ENCODE measurements at regions of chr18 and their contacts with region 1.

Region 1: DNA sequence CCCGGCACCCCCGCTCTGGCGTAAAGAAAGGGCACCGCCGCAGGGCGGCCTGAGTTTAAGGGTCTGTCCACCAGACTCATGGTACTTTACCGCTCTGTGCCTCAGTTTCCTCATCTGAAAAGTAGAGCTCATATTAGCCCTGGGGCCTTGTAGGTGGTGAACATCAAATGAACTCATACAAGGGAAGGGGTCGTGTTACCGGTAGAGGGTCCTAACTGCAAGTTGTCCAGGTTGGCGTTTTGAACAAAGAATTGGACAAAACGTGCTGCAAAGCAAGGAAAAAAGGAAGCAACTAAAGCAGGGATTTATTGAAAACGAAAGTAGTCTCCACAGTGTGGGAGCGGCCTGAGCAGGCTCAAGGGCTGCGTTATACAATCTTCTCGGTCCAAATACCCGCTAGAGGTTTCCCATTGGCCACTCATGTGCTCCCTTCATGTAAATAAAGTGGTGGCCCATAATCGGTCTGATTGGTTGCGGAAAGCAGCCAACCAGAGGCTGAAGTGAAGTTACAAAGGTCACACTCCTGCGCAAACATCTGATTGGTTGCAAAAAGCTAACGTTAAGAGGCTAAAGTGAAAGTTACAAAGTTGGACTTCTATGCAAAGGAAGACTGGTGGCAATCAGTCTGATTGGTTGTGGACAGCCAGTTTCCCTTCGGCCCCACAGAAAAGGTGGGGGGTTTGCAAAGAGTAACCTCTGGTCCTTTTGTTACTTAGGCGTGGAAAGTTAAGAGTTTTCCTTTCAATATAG is 80.7 kb upstream of the LDLRAD4 start:
- DNase-seq: peak; percentile 99
- ATAC-seq: peak; percentile 91
- H3K4me3 ChIP-seq: peak overlapping the region; percentile 81 to 98 (median 88)
- H3K27ac ChIP-seq: peak overlapping the region; percentile 99
- H3K4me1 ChIP-seq: peaks cover 37% of the 10 kb centered on the region
- H3K27me3 ChIP-seq: no peaks in the 10 kb centered on the region; a peak in 1 of 5 replicates
- CTCF ChIP-seq: peak; percentile 4; the same call in 1 of the 2 replicates
- EP300 ChIP-seq: peak; percentile 30 to 36; a peak in 1 of 4 replicates
- POLR2A ChIP-seq: peak in 1 of 2 experiments; percentile 83; a peak in 2 of 4 replicates
- RAD21 ChIP-seq: no peak

Region 2: GRCh38 chr18:12851716-12852115 is 286.1 kb before region 1 on chr18:
- CTCF ChIA-PET with region 1: no interaction called
- POLR2A ChIA-PET with region 1: no interaction called
- in situ Hi-C with region 1: no loop called
- intact Hi-C with region 1: no loop called
- DNase-seq: no peak
- ATAC-seq: no peak
- H3K4me3 ChIP-seq: no peak overlapping the region
- H3K27ac ChIP-seq: no peak overlapping the region
- H3K4me1 ChIP-seq: peaks cover 15% of the 10 kb centered on the region
- H3K27me3 ChIP-seq: no peaks in the 10 kb centered on the region
- CTCF ChIP-seq: no peak
- EP300 ChIP-seq: no peak
- POLR2A ChIP-seq: no peak
- RAD21 ChIP-seq: no peak

Region 3: DNA sequence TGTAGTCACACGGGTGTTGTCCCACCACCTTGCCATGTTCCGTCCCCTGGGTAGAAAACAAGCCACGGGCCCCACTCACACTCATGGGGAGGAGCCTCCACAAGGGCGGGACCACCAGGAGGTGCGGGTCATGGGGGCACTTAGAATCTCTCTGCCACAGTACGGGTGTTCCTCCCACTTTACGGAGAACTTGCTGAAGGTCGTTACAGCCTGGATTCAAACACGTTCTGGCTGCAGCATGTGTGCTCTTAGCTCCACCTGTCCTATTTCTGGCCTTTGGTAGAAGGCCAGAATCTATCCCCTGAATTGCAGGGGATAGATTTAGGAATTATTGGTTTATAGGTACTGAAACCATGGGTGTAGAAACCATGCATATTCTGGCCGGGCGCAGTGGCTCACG is 161.5 kb before region 1 on chr18:
- CTCF ChIA-PET with region 1: no interaction called
- POLR2A ChIA-PET with region 1: no interaction called
- in situ Hi-C with region 1: no loop called
- intact Hi-C with region 1: no loop called
- DNase-seq: no peak
- ATAC-seq: no peak; the same call in 1 of the 3 replicates
- H3K4me3 ChIP-seq: no peak overlapping the region
- H3K27ac ChIP-seq: no peak overlapping the region
- H3K4me1 ChIP-seq: peaks cover 51% of the 10 kb centered on the region
- H3K27me3 ChIP-seq: no peaks in the 10 kb centered on the region
- CTCF ChIP-seq: no peak
- EP300 ChIP-seq: no peak
- POLR2A ChIP-seq: no peak
- RAD21 ChIP-seq: no peak

Region 4: GRCh38 chr18:13112982-13113381 is 24.9 kb before region 1 on chr18:
- CTCF ChIA-PET with region 1: no interaction called
- POLR2A ChIA-PET with region 1: interaction called, 11 read pairs
- in situ Hi-C with region 1: no loop called
- intact Hi-C with region 1: loop called (anchors 2 kb)
- DNase-seq: peak; percentile 81
- ATAC-seq: peak; percentile 100
- H3K4me3 ChIP-seq: no peak overlapping the region
- H3K27ac ChIP-seq: no peak overlapping the region
- H3K4me1 ChIP-seq: peaks cover 17% of the 10 kb centered on the region; the same call in 1 of the 2 replicates
- H3K27me3 ChIP-seq: no peaks in the 10 kb centered on the region
- CTCF ChIP-seq: peak; percentile 90
- EP300 ChIP-seq: no peak
- POLR2A ChIP-seq: no peak
- RAD21 ChIP-seq: peak; percentile 81

Region 5: DNA sequence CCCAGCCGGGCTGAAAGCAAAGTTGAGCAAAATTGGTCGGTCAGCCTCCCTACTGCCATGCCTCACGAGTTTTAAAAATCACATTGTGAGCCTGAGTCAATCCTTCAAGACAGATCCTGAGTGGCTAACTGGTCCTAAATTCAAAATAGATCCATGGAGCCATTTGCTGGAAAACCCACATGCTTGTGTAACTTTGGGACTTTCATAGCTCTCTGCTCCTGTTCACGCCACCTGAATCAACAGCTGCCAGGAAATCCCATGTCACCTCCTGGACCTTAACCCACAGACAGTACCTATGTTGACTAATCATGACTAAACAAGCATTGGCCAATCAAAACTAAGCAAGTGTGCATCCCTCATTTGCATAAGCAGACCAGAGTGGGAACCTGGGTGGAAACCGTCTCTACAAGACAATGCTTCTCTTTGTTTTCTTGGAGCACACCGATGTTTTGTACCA is 37.9 kb after region 1 on chr18:
- CTCF ChIA-PET with region 1: no interaction called
- POLR2A ChIA-PET with region 1: interaction called, 15 read pairs
- in situ Hi-C with region 1: no loop called
- intact Hi-C with region 1: loop called (anchors 5 kb)
- DNase-seq: peak; percentile 94
- ATAC-seq: peak; percentile 87
- H3K4me3 ChIP-seq: no peak overlapping the region
- H3K27ac ChIP-seq: peak overlapping the region; percentile 96
- H3K4me1 ChIP-seq: peaks cover 74% of the 10 kb centered on the region
- H3K27me3 ChIP-seq: no peaks in the 10 kb centered on the region
- CTCF ChIP-seq: no peak
- EP300 ChIP-seq: peak; percentile 84 to 92
- POLR2A ChIP-seq: peak; percentile 57 to 58; a peak in 3 of 4 replicates
- RAD21 ChIP-seq: no peak

Region 6: DNA sequence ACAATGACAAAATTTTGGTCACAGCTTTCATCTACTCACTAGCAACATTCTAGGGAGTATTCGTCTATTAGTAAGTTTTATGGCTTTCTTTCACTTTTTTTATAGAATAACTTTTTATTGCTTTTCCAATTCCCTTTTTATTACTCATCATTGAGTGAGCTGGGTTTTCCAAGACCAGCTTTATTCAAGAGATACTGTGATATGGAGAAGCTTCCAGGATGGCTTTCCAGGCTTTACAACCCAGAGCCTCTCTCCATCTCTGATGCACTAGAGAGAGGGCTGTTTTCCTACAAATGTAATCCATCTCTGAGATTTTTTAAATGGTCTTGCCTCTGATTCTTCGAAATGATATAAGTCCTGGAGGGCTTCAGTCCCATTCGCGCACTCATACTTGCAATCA is 199.0 kb after region 1 on chr18:
- CTCF ChIA-PET with region 1: no interaction called
- POLR2A ChIA-PET with region 1: interaction called, 4 read pairs
- in situ Hi-C with region 1: no loop called
- intact Hi-C with region 1: loop called (anchors 1 kb)
- DNase-seq: no peak
- ATAC-seq: no peak
- H3K4me3 ChIP-seq: no peak overlapping the region
- H3K27ac ChIP-seq: peak overlapping the region; percentile 83
- H3K4me1 ChIP-seq: peaks cover 42% of the 10 kb centered on the region
- H3K27me3 ChIP-seq: no peaks in the 10 kb centered on the region
- CTCF ChIP-seq: no peak
- EP300 ChIP-seq: no peak
- POLR2A ChIP-seq: no peak
- RAD21 ChIP-seq: no peak

Region 7: GRCh38 chr18:13629841-13630715 is 492.2 kb after region 1 on chr18:
- CTCF ChIA-PET with region 1: interaction called, 6 read pairs
- POLR2A ChIA-PET with region 1: interaction called, 4 read pairs
- in situ Hi-C with region 1: loop called (anchors 5 kb)
- intact Hi-C with region 1: loop called (anchors 2 kb)
- DNase-seq: peak; percentile 67
- ATAC-seq: peak; percentile 95
- H3K4me3 ChIP-seq: no peak overlapping the region
- H3K27ac ChIP-seq: no peak overlapping the region
- H3K4me1 ChIP-seq: peaks cover 5% of the 10 kb centered on the region
- H3K27me3 ChIP-seq: no peaks in the 10 kb centered on the region
- CTCF ChIP-seq: peak; percentile 86
- EP300 ChIP-seq: no peak
- POLR2A ChIP-seq: no peak
- RAD21 ChIP-seq: peak; percentile 77